Thyroid gland (tissue), 4 donors: ENCODE measurements at regions of chr19 and their contacts with region 1.

Region 1: DNA sequence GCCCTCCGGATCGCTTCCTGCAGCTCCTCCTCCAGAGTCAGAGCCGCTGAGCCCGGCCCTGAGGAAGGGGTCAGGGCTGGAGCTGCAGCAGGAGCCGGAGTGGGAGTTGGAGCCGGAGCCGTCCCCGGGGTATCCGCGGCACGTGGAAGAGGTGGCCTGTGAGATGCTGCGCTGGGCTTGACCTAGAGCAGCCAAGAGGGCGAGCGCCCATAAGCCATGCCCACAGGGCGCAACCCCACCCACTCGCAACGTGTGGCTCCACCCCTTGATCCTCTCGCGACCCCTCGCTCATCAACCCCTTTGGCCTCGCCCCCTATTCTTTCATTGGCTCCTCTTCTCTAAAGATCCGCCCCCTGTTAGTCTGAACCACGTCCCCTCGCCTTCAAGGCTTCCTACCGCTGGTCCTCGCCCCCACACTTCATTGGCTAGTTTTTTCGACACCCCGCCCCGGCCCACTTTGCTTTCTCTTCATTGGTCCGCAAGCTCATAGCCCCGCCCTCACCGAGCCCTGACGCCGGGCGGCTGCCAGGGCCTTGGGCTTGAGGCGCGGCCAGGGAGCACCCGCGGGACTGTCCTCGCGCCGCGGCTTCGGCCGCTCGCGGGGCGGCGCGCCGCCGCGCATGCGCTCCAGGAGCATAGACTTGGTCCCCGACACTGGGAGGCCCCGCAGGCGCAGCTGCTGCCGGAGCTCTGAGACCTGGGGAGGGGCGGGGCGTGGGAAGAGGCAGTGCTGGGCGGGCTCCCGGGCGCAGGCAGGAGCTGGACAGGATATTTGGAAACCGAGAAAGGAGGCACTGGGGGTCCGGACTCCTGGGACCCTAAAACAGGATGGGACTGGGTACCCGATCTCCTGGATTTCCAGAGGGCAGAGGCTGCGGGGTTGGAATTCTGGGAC is 5.4 kb downstream of the MAMSTR start:
- DNase-seq: peak; percentile 99 to 100
- H3K4me3 ChIP-seq: peak overlapping the region; percentile 35 to 73 (median 60)
- H3K27ac ChIP-seq: peak overlapping the region; percentile 82 to 89 (median 85)
- H3K4me1 ChIP-seq: peaks cover 25 to 43% of the 10 kb centered on the region in 2 donors
- H3K27me3 ChIP-seq: no peaks in the 10 kb centered on the region
- CTCF ChIP-seq: no peak
- POLR2A ChIP-seq: peak in 1 of 2 donors; percentile 55

Region 2: GRCh38 chr19:48303367-48303766 is 410.7 kb before region 1 on chr19:
- intact Hi-C with region 1: no loop called
- DNase-seq: no peak
- H3K4me3 ChIP-seq: no peak overlapping the region
- H3K27ac ChIP-seq: no peak overlapping the region
- H3K4me1 ChIP-seq: no peaks in the 10 kb centered on the region
- H3K27me3 ChIP-seq: no peaks in the 10 kb centered on the region
- CTCF ChIP-seq: no peak
- POLR2A ChIP-seq: no peak

Region 3: GRCh38 chr19:48664450-48664849 is 49.7 kb before region 1 on chr19:
- intact Hi-C with region 1: no loop called
- DNase-seq: no peak
- H3K4me3 ChIP-seq: no peak overlapping the region
- H3K27ac ChIP-seq: no peak overlapping the region
- H3K4me1 ChIP-seq: peaks cover 0 to 3% of the 10 kb centered on the region in 2 donors
- H3K27me3 ChIP-seq: no peaks in the 10 kb centered on the region
- CTCF ChIP-seq: no peak
- POLR2A ChIP-seq: no peak

Region 4: DNA sequence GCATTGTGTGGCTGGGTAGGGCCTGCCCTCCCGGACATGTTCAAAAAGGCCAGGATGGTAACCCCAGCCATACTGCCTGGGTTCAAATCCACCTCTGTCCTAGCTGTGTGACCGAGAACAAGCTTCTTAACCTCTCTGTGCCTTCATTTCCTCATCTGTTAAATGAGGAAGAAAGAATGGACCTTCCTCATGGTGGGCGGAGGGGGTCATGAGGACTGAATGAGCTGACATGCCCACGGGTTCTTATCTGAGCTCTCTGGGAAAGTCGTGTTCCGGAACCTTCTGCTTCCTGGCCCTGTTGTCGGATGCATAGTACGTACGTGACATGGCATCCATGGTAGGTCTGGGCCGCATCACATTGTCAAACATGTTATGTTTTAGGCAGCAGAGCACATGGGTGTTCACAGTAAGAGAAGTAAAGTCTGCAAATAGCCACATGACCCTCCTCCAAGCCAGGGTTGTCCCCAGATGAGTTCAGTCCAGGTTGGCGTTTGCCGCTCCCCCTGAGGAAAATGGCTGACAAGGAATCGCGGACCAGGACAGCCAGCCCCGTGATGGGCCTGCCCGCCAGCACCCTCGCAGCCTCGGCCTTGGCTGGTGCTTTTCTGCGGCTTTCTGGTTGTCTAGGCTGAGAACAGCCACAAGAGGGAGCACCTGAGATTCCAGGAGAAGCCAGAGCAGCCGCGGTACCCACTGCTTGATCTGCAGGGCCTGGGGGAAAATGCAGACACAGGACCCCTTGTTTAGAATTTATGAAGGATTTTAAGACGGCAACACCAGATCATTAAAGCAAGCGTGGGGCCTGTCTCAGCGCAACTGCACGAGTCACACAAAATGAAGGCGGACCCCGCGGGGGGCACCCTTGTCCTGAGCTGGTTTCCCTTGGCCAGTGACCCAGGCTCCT is 38.9 kb before region 1 on chr19:
- intact Hi-C with region 1: loop called (anchors 5 kb)
- DNase-seq: peak; percentile 80 to 82
- H3K4me3 ChIP-seq: no peak overlapping the region
- H3K27ac ChIP-seq: no peak overlapping the region
- H3K4me1 ChIP-seq: peaks cover 6 to 7% of the 10 kb centered on the region in 2 donors
- H3K27me3 ChIP-seq: no peaks in the 10 kb centered on the region
- CTCF ChIP-seq: peak; percentile 65 to 87 (median 76)
- POLR2A ChIP-seq: no peak

Region 5: DNA sequence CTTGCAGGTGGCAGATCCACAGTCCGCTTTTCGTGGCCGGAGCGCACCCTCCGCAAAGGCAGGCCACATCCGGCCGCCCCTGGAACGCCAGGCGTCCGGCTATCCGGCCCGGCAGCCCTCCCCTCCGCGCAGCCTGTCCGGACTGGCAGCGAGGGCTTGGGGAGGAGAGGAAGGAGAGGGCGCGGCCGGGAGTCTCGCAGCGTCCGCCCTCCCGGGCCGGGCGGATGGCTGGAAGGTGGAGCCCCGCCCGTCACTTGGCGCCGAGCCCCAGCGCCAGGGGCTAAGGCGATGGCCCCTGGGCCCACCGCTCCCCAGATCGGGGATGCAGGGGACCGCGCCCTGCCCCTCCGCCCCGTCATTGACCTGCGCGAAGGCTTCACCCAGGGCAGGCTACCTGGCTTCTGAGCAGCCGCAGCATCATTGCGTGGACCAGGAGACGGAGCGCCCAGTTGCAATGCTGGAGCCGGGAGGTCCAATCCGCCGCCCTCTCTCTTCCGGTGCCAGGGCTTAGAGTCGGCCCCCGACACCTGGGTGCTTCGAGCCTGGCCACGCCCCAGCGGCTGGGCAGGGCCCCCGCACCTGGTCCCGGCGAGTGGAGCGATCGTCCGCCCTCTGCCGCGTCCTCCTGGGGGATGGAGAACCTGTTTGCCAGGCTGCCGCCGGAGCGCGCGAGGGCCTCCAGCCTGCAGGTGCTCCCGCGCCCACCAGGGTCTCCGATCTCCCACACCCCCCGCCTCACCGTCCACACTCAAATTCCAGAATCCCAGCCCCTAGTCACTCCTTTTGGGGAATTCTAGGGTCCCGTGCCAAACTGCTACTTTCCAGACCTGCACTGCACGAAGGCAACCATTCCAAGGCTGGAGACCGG is 38.6 kb after region 1 on chr19 and contains the start of gene FUT1:
- intact Hi-C with region 1: no loop called
- DNase-seq: peak; percentile 86 to 93
- H3K4me3 ChIP-seq: peak within 1 kb of the TSS; percentile 4 to 36 (median 18)
- H3K27ac ChIP-seq: peak within 1 kb of the TSS; percentile 24 to 56 (median 49)
- H3K4me1 ChIP-seq: peaks cover 9 to 22% of the 10 kb centered on the region in 2 donors
- H3K27me3 ChIP-seq: no peaks in the 10 kb centered on the region
- CTCF ChIP-seq: peak in 4 of 6 experiments; percentile 26 to 48 (median 32)
- POLR2A ChIP-seq: peak in 1 of 2 donors; percentile 58
- total RNA-seq, gene FUT1: 1.7 to 3.0 (median 2.0) TPM

Region 6: GRCh38 chr19:48798937-48799336 is 84.8 kb after region 1 on chr19:
- intact Hi-C with region 1: no loop called
- DNase-seq: no peak
- H3K4me3 ChIP-seq: no peak overlapping the region
- H3K27ac ChIP-seq: no peak overlapping the region
- H3K4me1 ChIP-seq: peaks cover 6 to 18% of the 10 kb centered on the region in 2 donors
- H3K27me3 ChIP-seq: no peaks in the 10 kb centered on the region
- CTCF ChIP-seq: no peak
- POLR2A ChIP-seq: no peak